ENCODE measurements at regions of chr7 and their contacts with region 1.

Region 1: DNA sequence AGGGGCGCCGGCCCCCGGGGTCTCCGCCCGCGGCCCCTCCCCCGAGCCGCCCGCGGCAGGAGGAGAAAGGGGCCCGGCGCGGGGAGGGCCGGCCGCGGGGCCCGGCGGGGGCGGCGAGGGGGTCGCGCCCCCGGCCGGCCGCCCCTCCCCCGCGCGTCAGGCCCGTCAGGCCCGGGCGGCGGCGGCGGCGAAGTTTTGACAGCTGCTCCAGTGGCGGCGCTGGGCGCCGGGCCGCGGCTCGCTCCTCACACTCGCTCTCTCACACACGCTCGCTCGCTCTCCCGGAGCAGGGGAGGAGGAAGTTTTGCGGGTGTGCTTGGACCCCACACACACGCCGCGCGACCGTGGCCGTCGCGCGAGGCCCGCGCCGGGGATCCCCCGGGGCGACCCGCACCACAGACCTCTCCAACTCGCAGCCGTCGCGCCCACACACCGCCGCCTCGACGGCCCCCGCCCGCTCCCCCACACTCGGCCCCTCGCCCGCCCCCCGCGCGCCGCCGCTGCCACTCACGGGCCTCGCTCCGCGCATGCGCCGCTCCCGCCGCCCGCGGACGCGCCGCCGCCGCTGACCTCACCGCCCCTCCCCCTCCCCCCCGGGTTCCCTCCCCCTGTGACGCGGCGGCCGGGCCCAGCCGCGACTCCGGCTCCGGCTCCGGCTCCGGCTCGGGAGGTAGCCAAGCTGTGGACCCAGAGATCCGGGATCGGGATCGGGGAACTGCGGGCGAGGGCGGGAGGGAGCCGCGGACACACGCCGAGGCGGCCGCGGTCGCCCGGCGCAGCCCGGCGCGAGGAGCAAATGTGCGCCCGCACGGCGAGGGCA is 518 bp upstream of the KMT2C start:
- DNase-seq: peak; percentile 91
- H3K4me3 ChIP-seq: peak overlapping the region; percentile 56 to 71 (median 67)
- H3K27ac ChIP-seq: peak overlapping the region; percentile 74
- H3K4me1 ChIP-seq: peaks cover 2% of the 10 kb centered on the region
- H3K27me3 ChIP-seq: no peaks in the 10 kb centered on the region
- CTCF ChIP-seq: no peak

Region 2: DNA sequence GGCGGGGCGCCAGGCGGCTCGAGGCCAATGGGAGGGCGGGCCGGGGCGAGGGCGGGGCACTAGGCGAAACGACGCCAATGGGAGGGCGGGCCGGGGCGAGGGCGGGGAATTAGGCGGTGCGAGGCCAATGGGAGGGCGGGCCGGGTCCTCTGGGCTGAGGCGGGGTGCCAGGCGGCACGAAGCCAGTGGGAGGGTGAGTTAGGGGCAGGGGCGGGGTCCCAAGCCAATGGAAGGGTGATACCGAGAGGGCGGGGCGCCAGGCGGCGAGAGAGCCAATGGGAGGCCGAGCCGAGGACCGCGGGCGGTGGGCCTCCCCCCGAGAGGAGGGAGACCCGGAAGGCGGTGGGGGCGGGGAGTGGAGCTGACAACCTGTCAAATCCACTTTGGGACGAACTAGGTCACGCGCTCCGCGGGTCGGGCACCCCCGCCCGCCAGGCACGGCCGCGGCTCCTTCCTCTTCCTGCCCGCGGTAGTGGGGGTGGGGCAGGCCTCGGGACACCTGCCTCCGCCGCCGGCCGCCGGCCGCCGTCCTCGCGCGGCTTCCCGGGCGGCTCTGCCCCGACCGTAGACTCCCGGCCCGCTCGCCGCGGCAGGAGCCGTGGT is 27.5 kb after region 1 on chr7:
- CTCF ChIA-PET with region 1: no interaction called
- dilution Hi-C with region 1: no loop called
- in situ Hi-C with region 1: no loop called
- intact Hi-C with region 1: loop called (anchors 1 kb)
- DNase-seq: peak; percentile 99
- H3K4me3 ChIP-seq: peak overlapping the region; percentile 87 to 90 (median 89)
- H3K27ac ChIP-seq: peak overlapping the region; percentile 50
- H3K4me1 ChIP-seq: peaks cover 5% of the 10 kb centered on the region
- H3K27me3 ChIP-seq: no peaks in the 10 kb centered on the region
- CTCF ChIP-seq: no peak

Region 3: DNA sequence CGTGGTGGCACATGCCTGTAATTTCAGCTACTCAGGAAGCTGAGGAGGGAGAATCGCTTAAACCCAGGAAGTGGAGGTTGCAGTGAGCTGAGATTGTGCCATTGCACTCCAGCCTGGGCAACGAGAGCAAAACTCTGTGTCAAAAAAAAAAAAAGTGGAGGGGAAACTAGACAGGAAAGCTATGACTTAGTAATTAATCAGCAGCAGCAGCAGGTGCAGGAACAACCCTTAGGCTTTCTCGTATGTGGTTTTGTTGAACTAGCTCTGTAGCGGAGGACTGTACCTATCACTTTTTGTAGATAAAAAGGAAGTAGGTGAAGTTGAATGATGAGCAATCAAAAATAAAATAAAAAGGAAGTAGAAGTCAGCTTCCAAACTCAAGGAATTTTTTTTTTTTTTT is 76.4 kb after region 1 on chr7:
- CTCF ChIA-PET with region 1: no interaction called
- dilution Hi-C with region 1: no loop called
- in situ Hi-C with region 1: no loop called
- intact Hi-C with region 1: no loop called
- DNase-seq: peak; percentile 63
- H3K4me3 ChIP-seq: no peak overlapping the region
- H3K27ac ChIP-seq: no peak overlapping the region
- H3K4me1 ChIP-seq: no peaks in the 10 kb centered on the region
- H3K27me3 ChIP-seq: no peaks in the 10 kb centered on the region
- CTCF ChIP-seq: no peak

Region 4: DNA sequence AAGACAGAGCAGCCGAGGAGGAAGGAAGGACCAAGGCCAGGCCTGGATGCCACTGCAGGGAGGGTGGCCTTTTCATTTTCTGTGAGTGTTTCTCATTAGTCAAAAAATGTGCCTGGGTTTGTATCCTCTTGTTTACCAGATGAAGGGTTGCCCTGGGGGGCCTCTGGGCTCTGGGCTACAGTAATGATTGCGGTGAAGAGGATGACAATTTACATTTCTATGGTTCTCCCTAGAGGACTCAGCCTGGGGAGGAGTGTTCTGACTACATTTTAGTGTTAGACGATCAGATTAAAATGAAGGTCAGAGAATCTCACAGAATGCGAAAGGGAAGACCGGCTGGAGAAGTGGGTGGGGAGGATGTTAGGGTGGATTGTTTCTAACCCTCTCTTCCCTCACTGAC is 107.5 kb after region 1 on chr7:
- CTCF ChIA-PET with region 1: no interaction called
- dilution Hi-C with region 1: no loop called
- in situ Hi-C with region 1: no loop called
- intact Hi-C with region 1: no loop called
- DNase-seq: no peak
- H3K4me3 ChIP-seq: no peak overlapping the region
- H3K27ac ChIP-seq: no peak overlapping the region
- H3K4me1 ChIP-seq: no peaks in the 10 kb centered on the region
- H3K27me3 ChIP-seq: no peaks in the 10 kb centered on the region
- CTCF ChIP-seq: no peak

Region 5: DNA sequence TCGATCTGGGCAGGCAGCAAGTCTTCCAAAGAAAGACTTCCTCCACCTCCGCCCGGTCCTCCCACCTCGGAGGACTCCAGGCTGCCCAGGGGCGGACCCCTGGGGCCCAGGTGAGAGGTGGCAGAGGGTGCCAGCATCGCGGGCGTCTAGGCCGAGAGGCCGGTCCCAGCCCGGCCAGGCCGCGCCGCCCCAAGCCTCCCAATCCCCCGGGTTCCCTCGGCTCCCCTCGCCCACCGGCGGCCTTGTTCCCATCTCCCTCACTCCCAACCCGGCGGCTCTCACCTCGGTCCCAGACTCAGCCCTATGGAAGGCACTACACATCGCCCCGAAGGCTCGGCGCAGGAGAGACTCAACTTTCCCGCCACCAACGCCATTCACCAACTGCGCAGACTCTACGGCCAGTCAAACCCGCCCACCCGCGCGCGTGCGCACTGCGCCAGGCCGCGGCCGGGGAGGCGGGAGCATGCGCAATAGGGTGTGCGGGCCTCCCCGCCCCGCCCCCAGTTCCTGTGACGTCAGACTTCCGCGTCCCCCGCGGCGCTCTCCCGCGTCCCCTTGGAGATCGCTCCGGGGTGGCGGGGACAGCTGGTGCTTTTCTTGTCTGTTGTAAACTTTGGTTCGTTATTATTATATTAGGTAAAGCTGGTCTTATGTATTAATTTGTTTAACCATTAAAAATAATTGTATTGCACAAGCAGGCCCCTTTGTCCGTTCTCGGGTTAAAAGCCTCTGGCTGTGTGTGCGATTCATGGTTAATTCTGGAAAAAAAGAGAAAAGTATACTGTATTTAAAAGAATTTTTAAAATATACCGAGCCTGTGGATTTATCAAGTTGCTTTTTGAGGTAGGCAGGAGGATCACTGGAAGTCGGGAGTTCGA is 239.7 kb after region 1 on chr7 and contains the start of gene XRCC2:
- CTCF ChIA-PET with region 1: no interaction called
- dilution Hi-C with region 1: no loop called
- in situ Hi-C with region 1: no loop called
- intact Hi-C with region 1: loop called (anchors 5 kb)
- DNase-seq: peak; percentile 89
- H3K4me3 ChIP-seq: peak within 1 kb of the TSS; percentile 72 to 100 (median 94)
- H3K27ac ChIP-seq: peak within 1 kb of the TSS; percentile 91
- H3K4me1 ChIP-seq: peaks cover 5% of the 10 kb centered on the region
- H3K27me3 ChIP-seq: no peaks in the 10 kb centered on the region
- CTCF ChIP-seq: no peak
- total RNA-seq, gene XRCC2: 1.2 to 7.6 TPM

Region 6: DNA sequence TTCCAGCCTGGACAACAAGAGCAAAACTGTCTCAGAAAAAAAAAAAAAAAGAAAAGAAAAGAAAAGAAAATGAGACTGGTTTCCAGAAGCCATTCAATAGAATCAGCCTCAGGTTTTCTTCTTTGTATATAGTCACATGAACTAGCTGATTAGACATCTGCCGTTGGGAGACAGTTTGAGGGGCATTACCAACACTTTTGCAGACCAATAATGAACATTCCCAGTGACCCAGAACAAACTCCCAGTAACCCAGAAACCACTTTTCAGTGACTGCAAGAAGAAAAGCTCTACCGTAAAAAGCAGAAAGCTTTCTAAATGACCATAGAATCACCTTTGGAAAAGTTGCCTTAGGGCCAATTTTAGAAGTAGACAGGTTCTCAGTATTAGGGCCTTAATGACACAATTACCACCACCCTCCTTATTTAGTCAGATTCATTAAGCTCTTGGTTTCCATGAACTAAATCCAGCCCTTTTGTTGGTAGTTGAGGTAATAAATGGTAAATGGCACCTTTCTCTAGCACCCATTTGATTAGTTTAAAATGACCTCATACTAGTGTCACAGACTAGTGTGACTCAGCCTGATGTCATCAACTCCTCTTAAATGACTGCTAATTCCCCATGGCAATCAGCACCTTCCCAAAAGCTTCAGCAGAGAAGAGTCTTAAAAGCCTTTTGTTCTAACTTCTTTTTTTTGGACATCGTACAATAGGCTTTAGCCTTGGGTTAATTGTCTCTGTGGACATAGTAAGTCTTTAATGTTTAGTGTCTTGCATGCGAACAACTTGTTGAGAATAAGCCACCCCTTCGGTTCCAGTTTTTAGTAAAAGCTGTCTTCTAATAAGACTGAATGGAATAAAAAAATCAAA is 273.2 kb after region 1 on chr7:
- CTCF ChIA-PET with region 1: no interaction called
- dilution Hi-C with region 1: no loop called
- in situ Hi-C with region 1: no loop called
- intact Hi-C with region 1: loop called (anchors 10 kb)
- DNase-seq: peak; percentile 64
- H3K4me3 ChIP-seq: no peak overlapping the region
- H3K27ac ChIP-seq: no peak overlapping the region
- H3K4me1 ChIP-seq: no peaks in the 10 kb centered on the region
- H3K27me3 ChIP-seq: no peaks in the 10 kb centered on the region
- CTCF ChIP-seq: no peak

Measured in mammary epithelial cell (primary cell).